PC-3 (cell line): ENCODE measurements at regions of chr6 and their contacts with region 1.

Region 1: DNA sequence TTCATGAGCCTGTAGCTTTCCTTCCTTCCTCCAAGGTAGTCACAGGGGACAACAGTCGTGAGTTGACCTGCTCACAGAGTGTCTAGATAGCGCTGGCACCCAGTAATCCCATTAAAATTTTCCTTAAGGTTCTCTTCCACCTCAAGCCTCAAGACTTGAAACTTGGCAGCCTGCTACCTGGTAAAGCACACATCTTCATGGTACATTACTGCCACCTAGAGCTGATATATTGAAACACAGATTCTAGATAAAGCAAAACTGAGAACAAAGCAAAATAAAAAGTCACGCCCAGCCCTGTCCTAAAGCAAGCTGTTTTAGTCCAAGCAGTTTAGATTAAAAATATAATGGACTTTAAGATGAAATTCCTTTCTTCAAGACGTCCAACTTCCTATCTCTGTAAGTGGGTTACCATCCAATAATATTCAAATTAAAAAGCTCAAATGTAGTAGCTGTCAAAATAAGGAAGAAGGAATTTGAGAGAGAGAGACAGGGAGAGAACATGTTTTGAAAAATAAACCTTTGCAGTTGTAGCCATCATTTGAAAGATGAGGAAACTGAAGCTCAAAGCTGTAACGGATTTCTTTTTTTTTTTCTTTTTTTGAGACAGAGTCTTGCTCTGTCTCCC is 50.7 kb upstream of the CD83 start:
- DNase-seq: peak; percentile 89
- ATAC-seq: peak; percentile 62
- H3K4me3 ChIP-seq: no peak overlapping the region
- H3K27ac ChIP-seq: no peak overlapping the region
- H3K4me1 ChIP-seq: peaks cover 24% of the 10 kb centered on the region
- H3K27me3 ChIP-seq: no peaks in the 10 kb centered on the region
- CTCF ChIP-seq: peak; percentile 84

Region 2: GRCh38 chr6:13339863-13340630 is 726.8 kb before region 1 on chr6:
- CTCF ChIA-PET with region 1: no interaction called
- POLR2A ChIA-PET with region 1: no interaction called
- intact Hi-C with region 1: no loop called
- DNase-seq: no peak
- ATAC-seq: no peak
- H3K4me3 ChIP-seq: no peak overlapping the region
- H3K27ac ChIP-seq: no peak overlapping the region
- H3K4me1 ChIP-seq: no peaks in the 10 kb centered on the region; the same call in 1 of the 2 replicates
- H3K27me3 ChIP-seq: no peaks in the 10 kb centered on the region
- CTCF ChIP-seq: no peak

Region 3: DNA sequence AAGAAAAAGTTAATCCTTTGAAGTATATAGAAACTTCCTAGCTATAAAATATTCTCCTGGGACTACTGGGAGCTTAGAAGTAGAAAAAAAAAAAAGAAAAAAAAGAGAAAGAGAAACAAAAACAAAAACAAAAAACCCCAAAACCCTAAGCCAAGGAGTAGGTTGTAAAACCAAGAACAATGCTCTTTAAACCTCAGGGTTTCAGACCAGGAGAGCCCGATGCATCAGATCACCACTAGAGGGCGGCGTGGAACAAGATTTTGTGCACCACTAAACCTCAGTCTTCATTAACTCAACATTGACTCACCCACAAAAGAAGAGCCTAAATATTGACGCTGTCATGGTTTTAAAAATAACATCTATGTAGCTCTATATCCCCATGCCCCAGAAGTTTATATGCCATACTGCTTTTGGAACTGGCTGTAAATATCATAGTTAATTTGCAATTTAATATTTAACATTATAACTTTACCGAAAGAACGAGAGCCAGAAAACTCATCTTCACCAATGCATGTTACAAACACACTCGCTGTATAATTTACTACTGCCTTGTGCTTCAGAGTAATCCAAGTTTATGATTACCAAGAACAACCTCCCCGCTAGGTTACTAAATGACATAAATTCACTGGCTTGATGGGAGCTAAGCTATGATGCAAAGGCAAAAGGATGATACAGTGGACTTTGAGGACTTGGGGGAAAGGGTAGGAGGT is 271.7 kb before region 1 on chr6:
- CTCF ChIA-PET with region 1: interaction called, 7 read pairs
- POLR2A ChIA-PET with region 1: no interaction called
- intact Hi-C with region 1: loop called (anchors 2 kb)
- DNase-seq: peak; percentile 95
- ATAC-seq: peak; percentile 86
- H3K4me3 ChIP-seq: no peak overlapping the region
- H3K27ac ChIP-seq: peak overlapping the region; percentile 71
- H3K4me1 ChIP-seq: peaks cover 31% of the 10 kb centered on the region
- H3K27me3 ChIP-seq: no peaks in the 10 kb centered on the region
- CTCF ChIP-seq: peak; percentile 94

Region 4: DNA sequence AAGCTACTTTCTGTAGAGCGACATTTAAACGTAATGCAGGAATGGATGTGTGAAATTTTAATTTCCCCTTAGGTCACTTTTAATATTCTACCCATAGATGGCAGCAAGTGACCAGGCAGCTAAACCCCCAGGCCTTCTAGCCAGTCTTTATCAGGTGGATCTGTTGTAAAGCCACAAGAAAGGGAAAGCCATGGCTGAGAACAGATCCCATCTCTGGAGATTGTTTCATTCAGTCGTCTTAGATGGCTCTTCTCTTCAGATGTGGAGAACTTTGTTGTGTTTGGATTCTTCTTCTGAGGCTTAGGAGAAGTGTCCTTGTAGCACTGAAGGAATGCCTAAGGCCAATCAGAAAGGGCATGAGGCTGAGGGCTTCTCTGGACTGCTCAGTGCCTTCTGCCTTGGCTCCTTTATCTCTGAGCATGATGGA is 157.9 kb before region 1 on chr6:
- CTCF ChIA-PET with region 1: interaction called, 27 read pairs
- POLR2A ChIA-PET with region 1: interaction called, 3 read pairs
- intact Hi-C with region 1: loop called (anchors 1 kb)
- DNase-seq: peak; percentile 82
- ATAC-seq: peak; percentile 88
- H3K4me3 ChIP-seq: no peak overlapping the region
- H3K27ac ChIP-seq: no peak overlapping the region
- H3K4me1 ChIP-seq: peaks cover 23% of the 10 kb centered on the region
- H3K27me3 ChIP-seq: no peaks in the 10 kb centered on the region
- CTCF ChIP-seq: peak; percentile 93

Region 5: DNA sequence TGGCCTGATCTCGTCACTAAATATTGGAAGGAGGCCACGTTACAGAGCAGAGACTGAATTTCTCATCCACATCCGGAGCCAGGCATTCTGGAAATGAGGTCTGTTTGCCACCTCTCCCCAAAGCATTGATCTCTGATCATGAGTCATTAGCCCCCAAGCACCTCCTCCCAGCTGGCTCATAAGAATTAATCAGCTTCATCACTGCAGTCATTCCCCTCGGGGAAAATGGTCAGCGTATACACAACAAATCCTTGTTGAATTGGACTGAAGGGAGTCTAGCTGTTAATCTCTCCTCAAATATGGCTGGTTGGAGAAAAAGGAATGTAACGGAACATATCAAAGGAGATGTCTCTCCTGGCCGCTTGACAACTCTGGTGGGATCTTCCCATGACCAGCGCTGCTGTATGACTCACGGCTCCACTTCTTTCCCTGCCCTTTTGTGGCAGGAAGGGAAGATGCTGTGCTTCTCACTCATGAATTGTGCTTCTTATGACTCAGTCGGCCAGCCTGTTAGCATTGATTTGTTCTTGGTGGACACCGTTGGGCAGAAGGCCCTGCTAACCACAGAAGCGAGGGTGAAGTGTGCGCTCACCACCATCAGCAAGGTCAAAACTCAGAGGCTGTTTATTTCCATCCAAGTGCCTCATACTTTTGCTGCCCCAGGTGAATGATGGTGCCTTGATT is 65.4 kb before region 1 on chr6:
- CTCF ChIA-PET with region 1: no interaction called
- POLR2A ChIA-PET with region 1: no interaction called
- intact Hi-C with region 1: loop called (anchors 2 kb)
- DNase-seq: peak; percentile 99
- ATAC-seq: peak; percentile 87
- H3K4me3 ChIP-seq: peak overlapping the region; percentile 51
- H3K27ac ChIP-seq: peak overlapping the region; percentile 96
- H3K4me1 ChIP-seq: peaks cover 29% of the 10 kb centered on the region
- H3K27me3 ChIP-seq: no peaks in the 10 kb centered on the region
- CTCF ChIP-seq: no peak

Region 6: DNA sequence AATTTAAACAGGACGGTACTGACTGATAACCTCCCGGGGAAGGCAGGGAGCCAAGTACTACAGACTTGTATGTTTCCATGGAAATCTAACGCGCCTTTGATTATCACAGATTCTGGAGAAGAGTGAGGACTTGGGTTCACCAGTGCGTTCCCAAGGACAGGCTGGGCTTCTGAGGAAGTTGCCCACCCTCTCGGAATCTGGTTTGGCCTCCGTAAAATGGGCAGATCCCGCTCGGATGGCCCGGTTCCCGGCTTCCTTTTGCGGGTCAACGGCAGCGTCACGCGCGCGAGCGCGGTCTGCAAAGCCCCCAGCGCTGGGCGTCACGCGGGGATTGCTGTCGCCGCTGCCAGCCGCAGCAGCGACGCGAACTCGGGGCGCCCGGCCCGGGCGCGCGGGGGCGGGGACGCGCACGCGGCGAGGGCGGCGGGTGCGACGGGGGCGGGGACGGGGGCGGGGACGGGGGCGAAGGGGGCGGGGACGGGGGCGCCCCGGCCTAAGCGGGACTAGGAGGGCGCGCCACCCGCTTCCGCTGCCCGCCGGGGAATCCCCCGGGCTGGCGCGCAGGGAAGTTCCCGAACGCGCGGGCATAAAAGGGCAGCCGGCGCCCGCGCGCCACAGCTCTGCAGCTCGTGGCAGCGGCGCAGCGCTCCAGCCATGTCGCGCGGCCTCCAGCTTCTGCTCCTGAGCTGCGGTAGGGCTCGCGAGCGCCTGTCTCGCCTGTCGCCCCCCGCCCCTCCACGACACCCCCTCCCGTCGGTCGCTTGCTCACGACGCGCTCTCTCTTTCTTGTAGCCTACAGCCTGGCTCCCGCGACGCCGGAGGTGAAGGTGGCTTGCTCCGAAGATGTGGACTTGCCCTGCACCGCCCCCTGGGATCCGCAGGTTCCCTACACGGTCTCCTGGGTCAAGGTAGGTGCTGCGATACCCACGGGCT is 50.5 kb after region 1 on chr6 and contains the start of gene CD83:
- CTCF ChIA-PET with region 1: no interaction called
- POLR2A ChIA-PET with region 1: interaction called, 5 read pairs
- intact Hi-C with region 1: loop called (anchors 1 kb)
- DNase-seq: peak; percentile 72
- ATAC-seq: peak; percentile 80
- H3K4me3 ChIP-seq: peak within 1 kb of the TSS; percentile 89
- H3K27ac ChIP-seq: no peak within 1 kb of the TSS
- H3K4me1 ChIP-seq: peaks cover 8% of the 10 kb centered on the region; the same call in 1 of the 2 replicates
- H3K27me3 ChIP-seq: no peaks in the 10 kb centered on the region
- CTCF ChIP-seq: peak; percentile 52
- total RNA-seq, gene CD83: 13.0 and 15.2 TPM in 2 replicates